ENCODE measurements at regions of chr7 and their contacts with region 1.

Region 1: DNA sequence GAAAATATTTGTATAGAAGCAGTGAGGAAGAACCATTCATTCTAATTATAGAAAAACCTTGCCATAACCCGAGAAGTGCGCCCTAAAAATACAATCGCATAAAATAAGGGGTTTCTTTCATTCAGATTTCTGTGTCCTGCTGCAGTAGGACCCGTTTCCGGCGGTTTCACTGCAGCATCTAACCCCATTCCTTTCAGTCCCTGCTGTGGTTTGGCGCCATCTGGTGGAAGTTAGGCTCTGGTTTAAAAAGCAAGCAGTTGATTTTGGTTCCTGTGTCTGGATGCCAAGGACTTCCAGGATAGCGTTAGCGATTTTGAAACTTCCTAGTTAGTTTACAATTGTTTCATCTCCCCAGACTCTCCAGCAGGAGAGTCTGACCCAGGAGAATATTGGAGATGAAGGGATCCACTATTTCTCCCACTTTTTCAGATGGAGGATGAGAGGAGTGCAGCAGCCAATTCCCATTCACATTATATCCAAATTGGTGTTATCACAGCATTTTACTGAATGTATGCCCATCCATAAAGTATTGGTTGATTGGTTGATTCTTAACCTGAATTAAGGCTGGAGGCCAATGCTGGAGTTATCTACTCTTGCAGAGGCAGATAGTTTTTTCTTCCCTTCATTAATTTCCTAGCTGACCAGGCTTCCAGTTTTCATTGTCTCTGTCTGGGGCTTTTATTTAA is 128.8 kb upstream of the CACNA2D1 start:
- DNase-seq: peak; percentile 82 to 86
- ATAC-seq: peak; percentile 97 to 99
- H3K4me3 ChIP-seq: no peak overlapping the region
- H3K27ac ChIP-seq: peak overlapping the region; percentile 34 to 57; a peak in 3 of 6 replicates
- H3K4me1 ChIP-seq: no peaks in the 10 kb centered on the region
- CTCF ChIP-seq: peak; percentile 96
- EP300 ChIP-seq: no peak
- POLR2A ChIP-seq: no peak
- RAD21 ChIP-seq: peak; percentile 95 to 97

Region 2: GRCh38 chr7:82044497-82045080 is 527.7 kb before region 1 on chr7:
- CTCF ChIA-PET with region 1: interaction called, 31 read pairs
- POLR2A ChIA-PET with region 1: no interaction called
- DNase-seq: peak in 1 of 2 experiments; percentile 66
- ATAC-seq: peak in 1 of 2 experiments; percentile 22; a peak in 1 of 6 replicates
- H3K4me3 ChIP-seq: no peak overlapping the region
- H3K27ac ChIP-seq: peak overlapping the region in 1 of 2 experiments; percentile 24; a peak in 4 of 6 replicates
- H3K4me1 ChIP-seq: peaks cover 29% of the 10 kb centered on the region
- CTCF ChIP-seq: peak; percentile 94
- EP300 ChIP-seq: no peak
- POLR2A ChIP-seq: no peak
- RAD21 ChIP-seq: peak; percentile 92 to 98

Region 3: GRCh38 chr7:82481499-82482097 is 90.7 kb before region 1 on chr7:
- CTCF ChIA-PET with region 1: interaction called, 12 read pairs
- POLR2A ChIA-PET with region 1: no interaction called
- DNase-seq: peak; percentile 29 to 31
- ATAC-seq: peak in 1 of 2 experiments; percentile 68; a peak in 1 of 6 replicates
- H3K4me3 ChIP-seq: no peak overlapping the region
- H3K27ac ChIP-seq: no peak overlapping the region
- H3K4me1 ChIP-seq: no peaks in the 10 kb centered on the region
- CTCF ChIP-seq: peak; percentile 74
- EP300 ChIP-seq: no peak
- POLR2A ChIP-seq: no peak
- RAD21 ChIP-seq: peak; percentile 62 to 66

Region 4: DNA sequence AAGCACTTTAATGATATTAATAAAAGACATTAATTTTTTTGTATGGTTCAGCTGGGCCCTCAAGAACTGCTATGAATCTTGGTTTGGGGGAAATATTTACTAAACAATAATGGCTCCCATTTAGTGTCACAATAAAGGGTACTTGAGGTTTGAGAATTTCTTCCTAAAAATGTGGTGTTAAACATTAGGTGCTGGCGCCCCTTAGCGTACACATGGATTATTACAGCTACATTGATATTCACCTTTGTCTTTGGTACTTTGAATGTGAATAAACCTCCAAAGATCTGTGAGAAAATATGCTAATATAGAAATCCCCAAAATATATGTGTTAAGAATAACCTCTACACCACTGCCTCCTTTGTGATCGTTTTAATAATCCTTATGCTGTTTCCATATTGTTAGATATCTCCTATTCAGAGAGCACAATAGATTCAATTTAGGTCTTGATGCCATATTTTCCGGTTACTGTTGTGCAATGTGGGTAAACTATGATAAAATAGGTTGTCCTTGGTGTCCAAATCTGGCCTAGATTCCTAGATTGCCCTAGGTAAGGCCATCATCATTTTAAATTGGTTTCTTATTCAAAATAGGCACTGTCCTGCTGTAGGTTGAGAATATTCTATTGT is 33.0 kb after region 1 on chr7:
- CTCF ChIA-PET with region 1: interaction called, 10 read pairs
- POLR2A ChIA-PET with region 1: no interaction called
- DNase-seq: peak; percentile 22 to 68
- ATAC-seq: peak in 1 of 2 experiments; percentile 48; a peak in 3 of 6 replicates
- H3K4me3 ChIP-seq: no peak overlapping the region
- H3K27ac ChIP-seq: no peak overlapping the region
- H3K4me1 ChIP-seq: 0 out of 3 replicates have a peak, but pooled peaks cover 2% of the 10 kb centered on the region
- CTCF ChIP-seq: peak; percentile 88
- EP300 ChIP-seq: no peak
- POLR2A ChIP-seq: no peak
- RAD21 ChIP-seq: peak; percentile 86

Region 5: GRCh38 chr7:82859106-82859850 is 286.9 kb after region 1 on chr7:
- CTCF ChIA-PET with region 1: no interaction called
- POLR2A ChIA-PET with region 1: no interaction called
- DNase-seq: no peak
- ATAC-seq: no peak
- H3K4me3 ChIP-seq: no peak overlapping the region
- H3K27ac ChIP-seq: no peak overlapping the region
- H3K4me1 ChIP-seq: no peaks in the 10 kb centered on the region
- CTCF ChIP-seq: no peak
- EP300 ChIP-seq: no peak
- POLR2A ChIP-seq: no peak
- RAD21 ChIP-seq: no peak

Measured in A549 (cell line).